ENCODE measurements at regions of chr5 and their contacts with region 1.

Region 1: GRCh38 chr5:72816311-72817145 is at the start of gene TNPO1:
- DNase-seq: peak; percentile 86
- H3K4me3 Mint-ChIP-seq: peak within 1 kb of the TSS; percentile 86
- H3K27ac Mint-ChIP-seq: peak within 1 kb of the TSS; percentile 86
- H3K4me1 Mint-ChIP-seq: peaks cover 23% of the 10 kb centered on the region
- H3K27me3 Mint-ChIP-seq: peaks cover 23% of the 10 kb centered on the region

Region 2: DNA sequence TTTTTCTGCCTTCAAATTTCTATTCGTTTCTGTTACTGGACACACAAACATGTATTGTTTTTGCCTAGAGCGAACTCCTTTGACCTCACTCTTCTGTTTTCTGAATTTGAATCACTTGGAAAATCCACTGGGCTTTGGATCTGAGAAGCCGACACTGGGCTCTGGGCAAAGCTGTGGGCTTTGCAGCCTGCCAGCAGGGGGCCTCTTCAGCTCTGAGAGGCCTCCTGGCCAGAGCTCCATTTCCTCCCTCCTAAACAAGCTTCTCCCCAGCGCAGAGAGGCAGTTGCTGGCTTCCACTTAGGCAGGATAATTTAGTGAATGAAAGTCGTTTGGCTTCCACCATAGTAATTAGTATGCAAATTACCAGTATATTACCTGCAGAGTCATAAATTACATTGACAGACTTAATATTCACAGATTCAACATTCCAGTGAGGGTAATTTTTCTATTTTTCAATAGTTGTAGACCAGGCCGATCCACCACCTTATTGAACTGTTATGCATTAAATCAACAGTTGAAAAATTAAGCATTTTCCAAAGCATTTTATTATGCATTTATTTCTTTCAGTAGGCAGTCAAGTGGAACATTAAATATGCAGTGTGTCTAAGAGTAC is 205.3 kb before region 1 on chr5:
- CTCF ChIA-PET with region 1: interaction called, 38 read pairs
- DNase-seq: peak; percentile 50
- H3K4me3 Mint-ChIP-seq: no peak overlapping the region
- H3K27ac Mint-ChIP-seq: no peak overlapping the region
- H3K4me1 Mint-ChIP-seq: no peaks in the 10 kb centered on the region
- H3K27me3 Mint-ChIP-seq: peaks cover 4% of the 10 kb centered on the region

Region 3: GRCh38 chr5:72829707-72830106 is 13.2 kb after region 1 on chr5:
- CTCF ChIA-PET with region 1: interaction called, 17 read pairs
- DNase-seq: no peak
- H3K4me3 Mint-ChIP-seq: no peak overlapping the region
- H3K27ac Mint-ChIP-seq: no peak overlapping the region
- H3K4me1 Mint-ChIP-seq: no peaks in the 10 kb centered on the region
- H3K27me3 Mint-ChIP-seq: peaks cover 4% of the 10 kb centered on the region

Measured in activated naive CD4-positive, alpha-beta T cell treated with anti-CD3 and anti-CD28 coated beads, Interleukin-2, amount 10 ng/mL, durations not matched to agents 7 days and 5 days (primary cell).